ENCODE measurements at regions of chr3 and their contacts with region 1.

Region 1: GRCh38 chr3:10205451-10206165 is 40.9 kb downstream of the IRAK2 start:
- DNase-seq: peak; percentile 80
- ATAC-seq: peak; percentile 82
- H3K4me3 ChIP-seq: peak overlapping the region in 1 of 2 experiments; percentile 24; a peak in 2 of 4 replicates
- H3K27ac ChIP-seq: peak overlapping the region; percentile 78
- H3K4me1 ChIP-seq: peaks cover 46 to 50% of the 10 kb centered on the region in 2 experiments
- H3K27me3 ChIP-seq: no peaks in the 10 kb centered on the region
- CTCF ChIP-seq: no peak
- POLR2A ChIP-seq: no peak
- RAD21 ChIP-seq: 0 out of 2 replicates have a peak, but pooled peaks have one; percentile 1

Region 2: GRCh38 chr3:10164546-10165393 is 40.8 kb before region 1 on chr3 and contains the start of gene IRAK2:
- CTCF ChIA-PET with region 1: no interaction called
- POLR2A ChIA-PET with region 1: no interaction called
- RAD21 ChIA-PET with region 1: no interaction called
- intact Hi-C with region 1: loop called (anchors 5 kb)
- DNase-seq: peak; percentile 22
- ATAC-seq: peak; percentile 94
- H3K4me3 ChIP-seq: peak within 1 kb of the TSS; percentile 68 to 86
- H3K27ac ChIP-seq: peak within 1 kb of the TSS; percentile 39; the same call in 1 of the 2 replicates
- H3K4me1 ChIP-seq: peaks cover 6 to 15% of the 10 kb centered on the region in 2 experiments; a peak in 1 of 4 replicates
- H3K27me3 ChIP-seq: no peaks in the 10 kb centered on the region
- CTCF ChIP-seq: peak in 2 of 3 experiments; percentile 54 to 68; a peak in 4 of 6 replicates
- POLR2A ChIP-seq: peak; percentile 50
- RAD21 ChIP-seq: peak; percentile 47
- total RNA-seq, gene IRAK2: 3.6 TPM